Mammary epithelial cell (primary cell): ENCODE measurements at regions of chr4 and their contacts with region 1.

Region 1: DNA sequence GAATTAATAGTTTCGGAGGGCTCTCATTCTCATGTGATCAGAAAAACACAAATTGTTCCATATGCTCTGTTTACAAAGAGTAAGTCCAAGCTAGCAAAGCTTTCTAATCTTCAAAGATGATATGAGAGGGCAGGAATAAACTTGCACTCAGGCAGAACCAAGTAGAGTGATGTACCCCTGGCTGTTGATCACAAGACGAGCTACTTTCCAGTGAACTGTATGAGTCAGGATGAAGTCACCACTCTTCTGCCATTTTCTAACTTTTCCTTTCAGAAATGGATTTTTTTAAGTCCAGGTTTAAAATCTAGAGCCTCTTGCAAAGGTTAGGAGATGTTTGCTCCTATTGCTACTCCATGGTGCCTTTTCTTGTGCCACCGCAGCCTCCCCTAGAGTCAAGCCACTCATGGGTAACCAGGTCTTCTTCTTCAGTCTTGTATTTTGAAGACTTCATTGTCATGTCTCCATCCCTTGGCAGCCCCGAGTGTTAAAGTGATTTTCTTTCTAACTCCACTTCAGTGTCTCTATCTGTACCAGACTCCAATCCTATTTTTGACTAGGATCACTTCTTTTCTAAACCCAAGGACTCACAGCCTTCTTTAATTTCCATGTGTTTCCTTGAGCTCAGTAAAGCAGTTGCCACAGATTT is 171.9 kb upstream of the GALNT7 start:
- DNase-seq: peak; percentile 91
- H3K4me3 ChIP-seq: no peak overlapping the region
- H3K27ac ChIP-seq: peak overlapping the region; percentile 49
- H3K4me1 ChIP-seq: peaks cover 45% of the 10 kb centered on the region
- H3K27me3 ChIP-seq: no peaks in the 10 kb centered on the region
- CTCF ChIP-seq: no peak

Region 2: DNA sequence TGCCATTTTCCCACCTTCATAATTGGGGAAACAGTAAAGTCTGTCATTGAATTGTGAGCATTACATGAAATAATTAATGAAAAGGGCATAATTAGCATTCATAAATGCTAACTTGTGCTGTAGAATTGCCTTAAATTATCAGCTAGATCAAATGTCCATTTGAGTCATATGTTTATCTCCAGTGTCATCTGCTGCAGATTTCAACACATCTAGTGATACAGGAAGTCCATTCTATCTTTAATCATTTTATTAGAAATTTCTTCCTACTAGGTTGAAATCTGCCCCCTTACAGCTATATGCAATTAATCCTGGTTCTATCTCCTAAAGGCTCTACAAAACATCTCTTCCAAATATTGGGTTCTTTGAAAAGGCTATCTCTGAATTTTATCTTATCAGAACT is 68.3 kb before region 1 on chr4:
- CTCF ChIA-PET with region 1: no interaction called
- dilution Hi-C with region 1: no loop called
- in situ Hi-C with region 1: no loop called
- intact Hi-C with region 1: loop called (anchors 2 kb)
- DNase-seq: no peak
- H3K4me3 ChIP-seq: no peak overlapping the region
- H3K27ac ChIP-seq: no peak overlapping the region
- H3K4me1 ChIP-seq: no peaks in the 10 kb centered on the region
- H3K27me3 ChIP-seq: no peaks in the 10 kb centered on the region
- CTCF ChIP-seq: no peak

Region 3: GRCh38 chr4:172974586-172974985 is 22.1 kb before region 1 on chr4:
- CTCF ChIA-PET with region 1: interaction called, 10 read pairs
- dilution Hi-C with region 1: no loop called
- in situ Hi-C with region 1: no loop called
- intact Hi-C with region 1: no loop called
- DNase-seq: no peak
- H3K4me3 ChIP-seq: no peak overlapping the region
- H3K27ac ChIP-seq: no peak overlapping the region
- H3K4me1 ChIP-seq: no peaks in the 10 kb centered on the region
- H3K27me3 ChIP-seq: no peaks in the 10 kb centered on the region
- CTCF ChIP-seq: no peak

Region 4: DNA sequence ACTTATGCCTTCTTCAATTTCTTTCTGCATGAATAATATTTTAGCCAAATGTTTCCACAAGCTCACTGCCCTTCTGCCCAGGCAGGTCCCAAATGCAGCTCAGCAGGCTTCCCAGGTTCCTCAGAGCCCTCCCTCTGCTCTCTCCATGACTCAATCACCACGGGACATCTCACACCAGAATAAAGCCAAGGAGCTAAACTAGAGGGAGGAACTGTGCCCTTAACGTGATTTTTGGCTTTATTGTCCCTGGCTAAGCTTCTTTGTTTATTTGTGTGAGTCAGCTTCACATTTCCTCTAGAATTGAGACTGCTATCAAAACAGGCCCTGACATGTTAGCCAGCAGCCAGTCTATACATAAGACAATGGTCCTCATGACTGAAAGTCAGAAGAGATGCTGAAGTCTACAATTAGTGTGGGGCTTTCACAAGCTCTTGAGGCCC is 14.5 kb before region 1 on chr4:
- CTCF ChIA-PET with region 1: interaction called, 4 read pairs
- dilution Hi-C with region 1: no loop called
- in situ Hi-C with region 1: no loop called
- intact Hi-C with region 1: loop called (anchors 2 kb)
- DNase-seq: peak; percentile 99
- H3K4me3 ChIP-seq: no peak overlapping the region
- H3K27ac ChIP-seq: peak overlapping the region; percentile 36
- H3K4me1 ChIP-seq: peaks cover 28% of the 10 kb centered on the region
- H3K27me3 ChIP-seq: no peaks in the 10 kb centered on the region
- CTCF ChIP-seq: no peak